HepG2 (cell line): ENCODE measurements at regions of chr17 and their contacts with region 1.

Region 1: DNA sequence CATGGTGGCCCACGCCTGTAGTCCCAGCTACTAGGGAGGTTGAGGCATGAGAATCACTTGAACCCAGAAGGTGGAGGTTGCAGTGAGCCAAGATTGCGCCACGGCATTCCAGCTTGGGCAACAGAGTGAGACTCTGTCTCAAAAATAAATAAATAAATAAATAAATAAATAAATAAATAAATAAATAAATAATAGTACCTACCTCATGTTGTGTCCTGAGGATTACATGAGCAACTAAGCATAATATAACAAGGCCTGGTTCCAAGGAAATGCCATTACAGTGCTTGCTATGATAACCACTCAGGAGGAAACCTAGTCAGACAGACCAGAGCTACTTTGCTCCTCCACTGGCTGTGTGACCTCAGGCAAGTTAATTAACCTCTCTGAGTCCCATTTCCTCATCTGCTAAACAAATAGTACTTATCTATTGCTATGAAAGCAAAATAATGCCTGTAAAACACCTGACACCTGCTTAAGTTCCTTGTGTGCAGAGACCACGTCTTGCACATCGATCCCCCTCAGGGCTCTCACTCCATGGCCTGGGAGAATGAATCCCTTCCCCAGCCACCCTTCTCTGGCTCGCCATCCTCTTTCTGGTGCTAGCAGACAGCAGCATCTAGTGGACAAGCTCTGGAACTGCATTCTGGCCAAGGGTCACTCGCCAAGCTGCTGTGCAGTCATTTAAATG is 7.5 kb downstream of the EPOP start:
- DNase-seq: peak; percentile 79
- ATAC-seq: peak; percentile 50
- H3K4me3 ChIP-seq: no peak overlapping the region
- H3K27ac ChIP-seq: no peak overlapping the region
- H3K4me1 ChIP-seq: peaks cover 75% of the 10 kb centered on the region
- H3K27me3 ChIP-seq: peaks cover 7 to 28% of the 10 kb centered on the region in 2 experiments; a peak in 4 of 5 replicates
- CTCF ChIP-seq: peak; percentile 99
- EP300 ChIP-seq: no peak
- POLR2A ChIP-seq: no peak
- RAD21 ChIP-seq: peak; percentile 100

Region 2: DNA sequence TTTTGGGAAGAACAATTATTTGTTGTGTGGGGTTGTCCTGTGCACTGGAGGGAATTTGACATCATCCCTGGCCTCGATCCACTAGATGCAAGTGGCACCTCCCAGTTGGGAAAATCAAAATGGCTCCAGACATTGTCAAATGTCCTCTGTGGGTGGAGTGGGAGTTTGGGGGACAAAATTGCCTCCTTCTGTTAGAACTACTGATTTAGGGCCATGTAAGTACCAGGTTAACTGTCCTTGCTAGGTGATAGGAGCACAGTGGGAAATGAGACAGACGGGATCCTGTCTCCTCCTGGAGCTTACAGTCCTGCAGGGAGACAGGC is 182.1 kb before region 1 on chr17:
- CTCF ChIA-PET with region 1: no interaction called
- POLR2A ChIA-PET with region 1: no interaction called
- in situ Hi-C with region 1: loop called (anchors 5 kb)
- intact Hi-C with region 1: no loop called
- DNase-seq: no peak
- ATAC-seq: no peak
- H3K4me3 ChIP-seq: no peak overlapping the region
- H3K27ac ChIP-seq: no peak overlapping the region
- H3K4me1 ChIP-seq: peaks cover 4% of the 10 kb centered on the region; the same call in 1 of the 2 replicates
- H3K27me3 ChIP-seq: peaks cover 6 to 35% of the 10 kb centered on the region in 2 experiments; a peak in 4 of 5 replicates
- CTCF ChIP-seq: no peak
- EP300 ChIP-seq: no peak
- POLR2A ChIP-seq: no peak
- RAD21 ChIP-seq: no peak

Region 3: GRCh38 chr17:38509008-38509771 is 158.1 kb before region 1 on chr17:
- CTCF ChIA-PET with region 1: interaction called, 14 read pairs
- POLR2A ChIA-PET with region 1: interaction called, 5 read pairs
- in situ Hi-C with region 1: no loop called
- intact Hi-C with region 1: loop called (anchors 5 kb)
- DNase-seq: peak; percentile 84
- ATAC-seq: peak; percentile 83
- H3K4me3 ChIP-seq: peak overlapping the region; percentile 0 to 66 (median 4); a peak in 2 of 6 replicates
- H3K27ac ChIP-seq: no peak overlapping the region
- H3K4me1 ChIP-seq: peaks cover 25% of the 10 kb centered on the region
- H3K27me3 ChIP-seq: peaks cover 8 to 73% of the 10 kb centered on the region in 2 experiments; a peak in 4 of 5 replicates
- CTCF ChIP-seq: peak; percentile 84
- EP300 ChIP-seq: no peak
- POLR2A ChIP-seq: no peak
- RAD21 ChIP-seq: peak; percentile 72

Region 4: GRCh38 chr17:38584350-38584925 is 82.8 kb before region 1 on chr17:
- CTCF ChIA-PET with region 1: interaction called, 24 read pairs
- POLR2A ChIA-PET with region 1: interaction called, 3 read pairs
- in situ Hi-C with region 1: no loop called
- intact Hi-C with region 1: loop called (anchors 1 kb)
- DNase-seq: peak; percentile 41
- ATAC-seq: peak; percentile 73
- H3K4me3 ChIP-seq: peak overlapping the region in 1 of 3 experiments; percentile 47; a peak in 1 of 6 replicates
- H3K27ac ChIP-seq: no peak overlapping the region
- H3K4me1 ChIP-seq: peaks cover 49% of the 10 kb centered on the region
- H3K27me3 ChIP-seq: peaks cover 0 to 25% of the 10 kb centered on the region in 2 experiments; a peak in 3 of 5 replicates
- CTCF ChIP-seq: peak; percentile 94
- EP300 ChIP-seq: no peak
- POLR2A ChIP-seq: no peak
- RAD21 ChIP-seq: peak; percentile 91